Transverse colon (tissue), 4 donors: ENCODE measurements at regions of chr1 and their contacts with region 1.

Region 1: DNA sequence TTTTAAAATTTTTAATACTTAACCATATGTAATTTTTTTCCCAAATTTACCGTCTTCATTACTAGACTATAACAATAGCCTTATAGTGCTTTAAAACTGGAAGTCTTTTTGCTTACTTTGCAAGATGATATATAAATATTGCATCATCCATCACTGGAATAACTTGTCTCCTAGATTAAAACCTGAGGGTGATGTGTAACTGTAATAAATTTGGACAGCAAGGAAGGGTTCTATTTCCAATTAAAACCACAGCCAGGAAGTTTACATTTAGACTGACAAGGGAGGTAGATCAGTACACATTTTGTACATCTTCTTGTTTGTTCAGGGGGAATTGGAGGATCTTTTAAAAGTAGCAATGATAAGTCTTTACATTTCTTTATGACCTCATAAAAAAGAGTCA is 21.9 kb downstream of the NTNG1 start:
- DNase-seq: no peak
- H3K4me3 ChIP-seq: no peak overlapping the region
- H3K27ac ChIP-seq: no peak overlapping the region
- H3K4me1 ChIP-seq: no peaks in the 10 kb centered on the region
- H3K27me3 ChIP-seq: no peaks in the 10 kb centered on the region
- CTCF ChIP-seq: no peak
- EP300 ChIP-seq: no peak
- POLR2A ChIP-seq: no peak

Region 2: GRCh38 chr1:107213225-107213624 is 50.5 kb after region 1 on chr1:
- in situ Hi-C with region 1: no loop called
- intact Hi-C with region 1: loop called (anchors 2 kb)
- DNase-seq: no peak
- H3K4me3 ChIP-seq: no peak overlapping the region
- H3K27ac ChIP-seq: no peak overlapping the region
- H3K4me1 ChIP-seq: no peaks in the 10 kb centered on the region
- H3K27me3 ChIP-seq: no peaks in the 10 kb centered on the region
- CTCF ChIP-seq: no peak
- EP300 ChIP-seq: no peak
- POLR2A ChIP-seq: no peak